ENCODE measurements at regions of chr15 and their contacts with region 1.

Region 1: GRCh38 chr15:39580117-39580484 is 778 bp upstream of the THBS1 start:
- DNase-seq: peak; percentile 94 to 98 (median 97)
- H3K4me3 ChIP-seq: peak overlapping the region; percentile 92
- H3K27ac ChIP-seq: peak overlapping the region; percentile 68 to 93
- H3K4me1 ChIP-seq: peaks cover 15% of the 10 kb centered on the region
- H3K27me3 ChIP-seq: no peaks in the 10 kb centered on the region
- CTCF ChIP-seq: peak; percentile 96 to 99 (median 98)
- EP300 ChIP-seq: no peak
- POLR2A ChIP-seq: no peak

Region 2: DNA sequence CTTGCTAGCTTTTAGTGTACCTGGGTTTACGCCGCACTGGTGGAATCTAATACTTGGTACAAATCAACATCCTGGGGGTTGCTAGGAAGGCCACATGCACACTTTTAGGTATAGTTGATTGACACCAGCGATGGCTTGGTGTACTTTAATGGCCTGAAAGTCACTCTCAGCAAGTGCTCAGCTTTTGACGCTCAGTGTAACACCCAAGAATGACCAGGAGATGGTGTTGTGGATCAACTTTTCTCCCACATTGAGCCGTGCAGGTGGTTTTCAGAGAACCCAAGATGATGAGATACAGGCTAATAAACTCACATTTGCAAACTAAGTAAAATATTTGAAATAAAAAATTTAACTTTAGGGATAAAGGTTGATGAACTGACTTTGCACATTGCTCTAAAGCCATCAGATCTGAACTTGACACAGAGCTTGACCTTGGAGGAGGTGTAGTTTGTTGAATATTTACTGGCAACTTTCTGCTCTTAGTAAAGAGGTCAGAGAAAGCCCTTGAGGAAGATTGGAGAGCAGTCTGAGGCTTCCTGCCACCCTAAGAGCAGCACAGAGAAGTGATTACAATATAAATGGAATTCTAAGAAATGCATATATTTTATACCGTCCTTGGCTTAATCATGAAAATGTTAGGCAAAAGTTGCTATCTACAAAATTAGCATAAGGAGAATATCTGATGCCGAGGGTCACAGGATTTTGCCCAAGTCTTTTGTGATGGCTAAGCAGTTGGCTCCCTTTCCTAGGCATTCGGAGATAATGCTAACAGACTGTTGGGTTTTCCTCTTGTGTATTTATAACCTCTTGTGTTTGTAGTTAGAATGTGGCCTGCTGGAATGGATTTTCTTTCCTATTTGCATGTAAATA is 872.1 kb before region 1 on chr15:
- intact Hi-C with region 1: loop called in 1 of 4 experiments (anchors 5 kb)
- DNase-seq: peak in 2 of 5 donors; percentile 22 to 42
- H3K4me3 ChIP-seq: no peak overlapping the region
- H3K27ac ChIP-seq: no peak overlapping the region
- H3K4me1 ChIP-seq: no peaks in the 10 kb centered on the region
- H3K27me3 ChIP-seq: no peaks in the 10 kb centered on the region
- CTCF ChIP-seq: peak in 2 of 3 donors; percentile 66 to 72
- EP300 ChIP-seq: no peak
- POLR2A ChIP-seq: no peak

Region 3: DNA sequence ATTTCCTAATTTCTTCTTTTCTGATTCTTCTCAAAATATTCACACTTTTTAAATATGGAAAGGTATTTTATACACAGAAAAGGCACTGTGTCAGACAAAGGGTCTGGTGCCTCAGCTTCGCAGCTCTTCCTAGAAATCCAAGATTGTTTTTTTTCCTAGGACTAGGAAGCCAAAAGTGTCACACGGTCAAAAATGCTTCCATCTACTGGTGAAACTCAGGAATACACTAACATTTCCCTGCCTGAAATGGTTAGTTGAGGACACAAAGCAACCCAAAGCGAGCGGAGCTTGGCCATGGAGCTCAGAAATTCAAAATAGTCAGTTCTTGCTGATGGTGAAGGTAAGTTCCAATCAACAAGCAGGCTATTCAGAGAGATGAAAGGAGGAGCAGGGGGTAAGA is 589.0 kb before region 1 on chr15:
- intact Hi-C with region 1: loop called in 1 of 4 experiments (anchors 10 kb)
- DNase-seq: no peak
- H3K4me3 ChIP-seq: no peak overlapping the region
- H3K27ac ChIP-seq: no peak overlapping the region
- H3K4me1 ChIP-seq: no peaks in the 10 kb centered on the region
- H3K27me3 ChIP-seq: no peaks in the 10 kb centered on the region
- CTCF ChIP-seq: peak in 1 of 3 donors; percentile 37
- EP300 ChIP-seq: no peak
- POLR2A ChIP-seq: no peak

Region 4: GRCh38 chr15:39358441-39359041 is 221.6 kb before region 1 on chr15:
- intact Hi-C with region 1: loop called in 1 of 4 experiments (anchors 5 kb)
- DNase-seq: peak; percentile 50 to 69 (median 61)
- H3K4me3 ChIP-seq: no peak overlapping the region
- H3K27ac ChIP-seq: peak overlapping the region in 1 of 2 donors; percentile 46
- H3K4me1 ChIP-seq: peaks cover 5% of the 10 kb centered on the region
- H3K27me3 ChIP-seq: no peaks in the 10 kb centered on the region
- CTCF ChIP-seq: no peak
- EP300 ChIP-seq: no peak
- POLR2A ChIP-seq: no peak

Region 5: DNA sequence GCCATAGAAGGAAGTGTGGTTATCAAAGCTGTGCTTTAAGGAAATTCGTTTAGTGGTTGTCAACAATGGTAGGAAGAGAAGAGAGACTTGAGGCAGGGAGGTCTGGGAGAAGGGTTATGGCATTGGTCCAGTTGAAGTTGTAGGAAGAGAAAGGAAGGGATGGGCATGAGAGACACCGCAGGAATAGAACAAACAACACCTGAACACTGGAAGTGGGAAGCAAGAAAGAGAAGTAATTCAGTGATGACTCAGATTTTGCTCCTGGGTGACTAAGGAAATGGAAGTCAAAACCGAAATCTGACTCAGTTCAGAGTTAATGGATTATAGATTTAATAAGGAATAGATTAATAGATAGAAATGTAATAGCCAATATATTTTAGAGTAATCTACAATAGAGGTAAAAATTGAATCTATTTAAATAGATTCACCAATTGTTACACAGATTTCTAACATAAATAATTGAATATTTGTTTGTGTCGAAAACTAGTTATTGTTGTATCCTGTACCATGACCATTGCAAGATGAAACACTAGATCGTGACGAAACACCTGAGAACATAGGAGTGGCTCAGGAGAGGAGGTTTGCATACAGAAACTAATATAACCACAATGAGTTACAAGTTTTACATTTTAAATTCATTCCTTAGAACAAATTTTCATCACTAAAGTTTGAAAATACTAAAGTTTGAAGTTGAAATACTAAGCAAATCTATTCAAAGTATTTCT is 36.8 kb after region 1 on chr15:
- intact Hi-C with region 1: no loop called
- DNase-seq: no peak
- H3K4me3 ChIP-seq: no peak overlapping the region
- H3K27ac ChIP-seq: no peak overlapping the region
- H3K4me1 ChIP-seq: no peaks in the 10 kb centered on the region
- H3K27me3 ChIP-seq: no peaks in the 10 kb centered on the region
- CTCF ChIP-seq: no peak
- EP300 ChIP-seq: no peak
- POLR2A ChIP-seq: no peak

Region 6: DNA sequence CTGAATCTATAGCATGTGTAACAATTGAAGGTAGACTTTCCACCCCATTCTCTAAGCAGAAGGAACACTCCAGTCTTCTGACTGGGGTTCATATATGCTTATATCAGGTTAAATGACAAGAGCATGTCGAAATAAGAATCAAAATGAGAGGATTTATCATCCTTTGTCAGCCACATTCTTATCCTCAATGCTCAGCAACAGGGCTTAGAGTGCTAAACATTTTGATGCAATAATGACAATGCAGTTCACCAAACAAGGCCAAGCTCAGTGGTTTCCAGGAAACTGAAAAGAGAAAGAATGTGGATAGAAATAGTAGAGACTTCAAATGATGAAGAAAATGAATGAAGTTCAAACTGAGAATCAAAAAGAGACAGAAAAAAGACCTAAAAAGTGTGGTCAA is 124.6 kb after region 1 on chr15:
- intact Hi-C with region 1: no loop called
- DNase-seq: no peak
- H3K4me3 ChIP-seq: no peak overlapping the region
- H3K27ac ChIP-seq: no peak overlapping the region
- H3K4me1 ChIP-seq: no peaks in the 10 kb centered on the region
- H3K27me3 ChIP-seq: no peaks in the 10 kb centered on the region
- CTCF ChIP-seq: no peak
- EP300 ChIP-seq: no peak
- POLR2A ChIP-seq: no peak

Region 7: DNA sequence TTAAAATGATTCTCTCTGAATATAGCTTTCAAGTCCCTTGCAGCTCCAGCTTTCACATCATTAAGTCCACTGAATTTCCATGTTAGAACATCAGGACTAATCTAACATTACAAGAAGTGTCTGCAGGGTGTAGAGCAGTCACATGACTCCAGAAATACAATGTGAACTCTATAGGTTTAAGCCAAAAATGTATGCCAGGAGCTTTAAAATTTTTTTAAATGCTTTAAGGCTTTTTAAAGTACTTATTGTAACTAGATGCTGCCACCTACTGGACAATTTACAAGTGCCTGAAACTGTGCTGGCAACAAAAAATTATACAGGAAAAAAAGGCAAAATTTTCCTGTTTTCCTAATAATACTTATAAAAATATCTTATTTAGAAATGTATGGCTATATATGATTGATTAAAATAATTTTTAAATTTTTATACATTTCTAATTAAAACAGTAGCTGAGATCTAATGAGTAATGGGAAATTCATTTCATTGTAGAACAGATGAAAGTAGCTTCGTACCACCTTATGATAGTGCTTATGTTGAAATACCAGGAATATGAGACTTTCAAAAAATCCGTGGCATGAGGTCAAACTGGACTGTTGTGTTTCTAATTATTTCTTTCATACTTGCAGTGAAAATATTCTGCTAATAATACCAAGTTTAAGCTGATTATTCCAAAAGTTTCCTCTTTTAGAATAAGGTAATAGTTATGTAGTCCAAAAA is 176.9 kb after region 1 on chr15:
- intact Hi-C with region 1: loop called in 2 of 4 experiments (anchors 10 kb)
- DNase-seq: no peak
- H3K4me3 ChIP-seq: no peak overlapping the region
- H3K27ac ChIP-seq: no peak overlapping the region
- H3K4me1 ChIP-seq: no peaks in the 10 kb centered on the region
- H3K27me3 ChIP-seq: no peaks in the 10 kb centered on the region
- CTCF ChIP-seq: peak; percentile 54 to 78 (median 64)
- EP300 ChIP-seq: no peak
- POLR2A ChIP-seq: no peak